GM12878 (cell line): ENCODE measurements at regions of chr12 and their contacts with region 1.

Region 1: GRCh38 chr12:16606201-16606849 is 363 bp upstream of the LMO3 start:
- DNase-seq: no peak
- ATAC-seq: peak; percentile 40
- H3K4me3 ChIP-seq: peak overlapping the region; percentile 34; the same call in 1 of the 2 replicates
- H3K27ac ChIP-seq: no peak overlapping the region
- H3K4me1 ChIP-seq: peaks cover 4% of the 10 kb centered on the region; the same call in 1 of the 2 replicates
- H3K27me3 ChIP-seq: peaks cover 0 to 2% of the 10 kb centered on the region in 2 experiments; a peak in 2 of 4 replicates
- CTCF ChIP-seq: no peak
- EP300 ChIP-seq: no peak
- POLR2A ChIP-seq: no peak
- RAD21 ChIP-seq: no peak

Region 2: DNA sequence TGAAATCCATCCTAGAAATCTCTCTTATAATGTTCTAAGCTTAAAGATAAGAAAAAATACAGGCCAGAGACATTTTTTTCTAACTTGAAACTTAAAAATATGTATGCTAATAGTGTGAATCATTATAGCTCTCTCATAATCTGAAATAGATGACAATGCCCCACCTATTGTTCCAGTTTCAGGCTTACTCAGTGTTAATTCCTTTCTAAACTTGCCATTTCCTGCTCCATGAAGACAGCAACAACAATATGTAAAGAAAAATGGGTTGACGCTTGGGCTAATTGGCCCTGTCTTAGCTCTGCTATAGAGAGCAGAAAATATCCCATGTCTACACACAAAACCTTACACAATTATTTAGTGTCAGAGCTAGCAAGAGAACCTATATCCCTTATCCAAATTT is 37.5 kb before region 1 on chr12:
- CTCF ChIA-PET with region 1: interaction called, 5 read pairs
- POLR2A ChIA-PET with region 1: interaction called, 5 read pairs
- RAD21 ChIA-PET with region 1: interaction called, 20 read pairs
- SMC1A ChIA-PET with region 1: interaction called, 15 read pairs
- in situ Hi-C with region 1: no loop called
- intact Hi-C with region 1: no loop called
- DNase-seq: peak; percentile 25
- ATAC-seq: peak; percentile 89
- H3K4me3 ChIP-seq: no peak overlapping the region
- H3K27ac ChIP-seq: no peak overlapping the region
- H3K4me1 ChIP-seq: no peaks in the 10 kb centered on the region
- H3K27me3 ChIP-seq: no peaks in the 10 kb centered on the region
- CTCF ChIP-seq: no peak
- EP300 ChIP-seq: 0 out of 4 replicates have a peak, but pooled peaks of 1 of the 2 experiments have one; percentile 22
- POLR2A ChIP-seq: no peak
- RAD21 ChIP-seq: no peak

Region 3: GRCh38 chr12:16593546-16593945 is 12.8 kb before region 1 on chr12:
- CTCF ChIA-PET with region 1: interaction called, 7 read pairs
- POLR2A ChIA-PET with region 1: interaction called, 6 read pairs
- RAD21 ChIA-PET with region 1: interaction called, 16 read pairs
- SMC1A ChIA-PET with region 1: interaction called, 121 read pairs
- in situ Hi-C with region 1: no loop called
- intact Hi-C with region 1: no loop called
- DNase-seq: no peak
- ATAC-seq: no peak
- H3K4me3 ChIP-seq: no peak overlapping the region
- H3K27ac ChIP-seq: no peak overlapping the region
- H3K4me1 ChIP-seq: no peaks in the 10 kb centered on the region
- H3K27me3 ChIP-seq: no peaks in the 10 kb centered on the region
- CTCF ChIP-seq: no peak
- EP300 ChIP-seq: no peak
- POLR2A ChIP-seq: no peak
- RAD21 ChIP-seq: no peak

Region 4: DNA sequence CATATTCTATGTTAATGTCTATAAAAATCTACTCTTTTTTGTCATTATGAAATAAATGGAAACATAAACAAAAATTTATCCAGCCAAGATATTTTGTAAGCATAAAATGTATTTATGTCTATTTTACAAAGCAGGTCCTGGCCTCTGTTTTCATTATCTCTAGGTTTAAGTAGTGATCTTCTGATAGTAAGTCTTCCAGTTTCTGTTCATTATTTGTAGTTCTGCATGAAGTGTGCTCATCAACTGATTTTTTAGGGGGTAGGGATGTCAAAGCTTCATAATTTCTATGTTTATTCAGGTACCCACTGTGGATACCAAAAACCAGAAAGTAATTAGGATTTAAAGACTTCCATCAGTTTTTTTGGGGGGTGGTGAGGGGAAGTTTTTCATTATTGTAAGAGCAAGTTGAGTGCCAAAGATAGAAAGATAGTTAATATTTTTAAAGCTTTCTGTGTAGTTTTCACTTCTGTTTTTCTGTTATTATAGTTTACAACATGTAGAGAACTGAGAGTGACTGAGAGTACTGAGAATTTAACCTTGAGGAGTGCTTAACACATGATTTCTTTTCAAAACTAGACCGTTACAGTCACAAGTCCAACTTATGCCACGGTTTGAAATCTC is 30.2 kb after region 1 on chr12:
- CTCF ChIA-PET with region 1: interaction called, 3 read pairs
- POLR2A ChIA-PET with region 1: interaction called, 5 read pairs
- RAD21 ChIA-PET with region 1: interaction called, 20 read pairs
- SMC1A ChIA-PET with region 1: interaction called, 31 read pairs
- in situ Hi-C with region 1: no loop called
- intact Hi-C with region 1: no loop called
- DNase-seq: peak; percentile 51
- ATAC-seq: peak; percentile 96
- H3K4me3 ChIP-seq: 0 out of 2 replicates have a peak overlapping the region, but pooled peaks have one; percentile 43
- H3K27ac ChIP-seq: peak overlapping the region; percentile 40; the same call in 1 of the 2 replicates
- H3K4me1 ChIP-seq: no peaks in the 10 kb centered on the region
- H3K27me3 ChIP-seq: no peaks in the 10 kb centered on the region
- CTCF ChIP-seq: no peak
- EP300 ChIP-seq: peak; percentile 12 to 64; a peak in 2 of 4 replicates
- POLR2A ChIP-seq: no peak
- RAD21 ChIP-seq: no peak

Region 5: GRCh38 chr12:16833376-16834015 is 227.2 kb after region 1 on chr12:
- CTCF ChIA-PET with region 1: interaction called, 4 read pairs
- POLR2A ChIA-PET with region 1: interaction called, 8 read pairs
- RAD21 ChIA-PET with region 1: interaction called, 14 read pairs
- SMC1A ChIA-PET with region 1: interaction called, 8 read pairs
- in situ Hi-C with region 1: no loop called
- intact Hi-C with region 1: no loop called
- DNase-seq: peak; percentile 33
- ATAC-seq: peak; percentile 82
- H3K4me3 ChIP-seq: no peak overlapping the region
- H3K27ac ChIP-seq: no peak overlapping the region
- H3K4me1 ChIP-seq: no peaks in the 10 kb centered on the region
- H3K27me3 ChIP-seq: no peaks in the 10 kb centered on the region
- CTCF ChIP-seq: no peak
- EP300 ChIP-seq: peak; percentile 18 to 48; a peak in 2 of 4 replicates
- POLR2A ChIP-seq: no peak
- RAD21 ChIP-seq: no peak